ENCODE measurements at regions of chr16 and their contacts with region 1.

Region 1: GRCh38 chr16:11161974-11162373 is 94.0 kb downstream of the SOCS1 start:
- DNase-seq: no peak
- H3K4me3 Mint-ChIP-seq: no peak overlapping the region
- H3K27ac Mint-ChIP-seq: no peak overlapping the region
- H3K4me1 Mint-ChIP-seq: peaks cover 69% of the 10 kb centered on the region
- H3K27me3 Mint-ChIP-seq: no peaks in the 10 kb centered on the region

Region 2: DNA sequence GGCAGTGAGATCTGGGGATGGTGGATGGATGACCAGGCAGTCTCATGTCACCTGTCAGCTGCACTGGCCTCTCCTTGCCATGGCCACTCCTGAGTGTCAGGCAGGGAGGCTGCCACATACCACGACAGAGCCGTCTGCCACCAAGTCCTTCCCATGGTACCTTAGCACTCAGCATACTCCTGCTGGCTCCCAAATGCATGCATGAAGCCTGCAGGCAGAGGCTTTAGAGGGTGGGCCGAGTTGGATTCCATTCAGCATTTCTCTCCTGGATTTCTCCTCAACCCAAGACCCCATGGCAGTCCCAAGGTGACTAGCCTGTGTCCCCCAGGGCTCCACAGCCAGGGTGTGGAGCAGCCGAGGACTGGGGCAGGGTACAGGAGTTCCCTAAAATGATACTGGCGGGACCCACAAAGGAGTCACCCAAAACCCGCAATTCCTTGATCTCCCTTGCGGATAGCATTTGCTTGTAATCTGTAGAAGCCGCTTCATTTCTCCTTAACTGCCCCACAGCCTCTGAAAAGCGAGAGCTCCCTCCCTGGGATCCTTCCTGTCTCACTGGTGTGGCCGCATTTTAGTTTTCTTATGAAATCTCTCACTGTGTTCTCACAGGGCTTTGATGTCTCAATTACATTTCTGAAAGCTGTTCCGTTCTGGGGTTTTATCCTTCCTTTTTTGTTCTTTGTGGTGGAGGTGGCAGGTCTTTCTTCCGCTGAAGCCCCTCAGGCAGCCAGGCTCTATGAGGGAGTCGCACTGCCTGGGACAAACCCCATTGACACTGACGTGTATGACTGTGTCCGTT is 47.4 kb before region 1 on chr16:
- intact Hi-C with region 1: no loop called
- DNase-seq: peak; percentile 55
- H3K4me3 Mint-ChIP-seq: peak overlapping the region; percentile 40
- H3K27ac Mint-ChIP-seq: peak overlapping the region; percentile 88
- H3K4me1 Mint-ChIP-seq: peaks cover 44% of the 10 kb centered on the region
- H3K27me3 Mint-ChIP-seq: no peaks in the 10 kb centered on the region

Region 3: DNA sequence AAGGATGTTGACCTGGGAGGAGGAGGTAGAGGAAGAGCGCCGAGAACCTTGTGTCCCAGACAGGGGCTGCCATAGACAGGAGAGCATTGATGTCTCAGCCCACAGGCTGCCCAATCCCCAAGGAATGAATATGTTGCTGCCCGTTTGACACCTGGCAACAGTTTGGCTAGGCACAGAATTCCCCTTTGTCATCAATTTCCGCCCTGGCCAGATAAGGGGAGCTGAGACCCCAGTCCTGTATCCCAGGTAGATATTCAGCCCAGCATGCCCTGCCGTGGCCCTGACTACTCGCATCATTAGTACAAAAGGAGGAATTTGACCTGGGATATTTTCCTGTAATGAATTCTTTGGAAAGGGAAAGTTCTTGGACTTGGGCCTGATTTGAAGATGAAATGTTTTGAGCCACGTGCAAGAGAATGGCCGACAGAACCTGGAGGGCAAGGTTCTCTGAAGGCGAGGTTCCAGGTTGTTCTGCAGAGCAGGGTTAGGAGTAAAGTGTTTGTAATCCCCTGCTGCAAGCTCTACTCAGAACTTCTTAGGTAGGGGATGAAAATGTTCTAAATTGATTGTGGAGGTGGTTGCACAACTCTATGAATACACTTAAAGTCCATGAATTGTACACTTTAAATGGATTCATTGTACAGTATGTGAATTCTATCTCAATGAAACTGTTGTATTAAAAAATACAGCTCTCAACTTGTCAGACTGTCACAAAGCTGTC is 14.8 kb before region 1 on chr16:
- intact Hi-C with region 1: loop called (anchors 2 kb)
- DNase-seq: no peak
- H3K4me3 Mint-ChIP-seq: no peak overlapping the region
- H3K27ac Mint-ChIP-seq: peak overlapping the region; percentile 29
- H3K4me1 Mint-ChIP-seq: peaks cover 35% of the 10 kb centered on the region
- H3K27me3 Mint-ChIP-seq: no peaks in the 10 kb centered on the region

Measured in activated T-helper 1 cell treated with anti-CD3 and anti-CD28 coated beads, Interleukin-12 subunit alpha, Interleukin-12 subunit beta, Interleukin-2, Interleukin-4 antibody, amounts not matched to agents 30 ng/mL and 10 ng/mL and 1 ng/mL, durations not matched to agents 14 hours and 24 hours and 36 hours (primary cell).